Gastrocnemius medialis (tissue), 4 donors: ENCODE measurements at regions of chr12 and their contacts with region 1.

Region 1: GRCh38 chr12:110270125-110270962 is 10.7 kb upstream of the ATP2A2 start:
- DNase-seq: peak; percentile 87 to 94
- ATAC-seq: peak; percentile 79 to 86
- H3K4me3 ChIP-seq: peak overlapping the region in 1 of 4 donors; percentile 18
- H3K27ac ChIP-seq: peak overlapping the region; percentile 82 to 91 (median 88)
- H3K4me1 ChIP-seq: peaks cover 45 to 58% of the 10 kb centered on the region in 2 donors
- H3K27me3 ChIP-seq: no peaks in the 10 kb centered on the region
- CTCF ChIP-seq: no peak
- POLR2A ChIP-seq: peak; percentile 51 to 52

Region 2: GRCh38 chr12:109625131-109625559 is 645.2 kb before region 1 on chr12:
- in situ Hi-C with region 1: no loop called
- intact Hi-C with region 1: no loop called
- DNase-seq: peak; percentile 86 to 90
- ATAC-seq: peak; percentile 94 to 95
- H3K4me3 ChIP-seq: no peak overlapping the region
- H3K27ac ChIP-seq: peak overlapping the region in 2 of 4 donors; percentile 35 to 47
- H3K4me1 ChIP-seq: no peaks in the 10 kb centered on the region
- H3K27me3 ChIP-seq: peaks cover 0 to 4% (median 0%) of the 10 kb centered on the region in 3 donors
- CTCF ChIP-seq: peak in 3 of 5 experiments; percentile 15 to 24 (median 16)
- POLR2A ChIP-seq: no peak

Region 3: GRCh38 chr12:110245369-110245772 is 25.0 kb before region 1 on chr12:
- in situ Hi-C with region 1: no loop called
- intact Hi-C with region 1: loop called (anchors 1 kb)
- DNase-seq: no peak
- ATAC-seq: no peak
- H3K4me3 ChIP-seq: no peak overlapping the region
- H3K27ac ChIP-seq: peak overlapping the region; percentile 89 to 94 (median 91)
- H3K4me1 ChIP-seq: peaks cover 50 to 54% of the 10 kb centered on the region in 2 donors
- H3K27me3 ChIP-seq: no peaks in the 10 kb centered on the region
- CTCF ChIP-seq: peak in 1 of 5 experiments; percentile 9
- POLR2A ChIP-seq: no peak

Region 4: GRCh38 chr12:110253176-110253575 is 17.2 kb before region 1 on chr12:
- in situ Hi-C with region 1: no loop called
- intact Hi-C with region 1: loop called (anchors 1 kb)
- DNase-seq: peak; percentile 74 to 87
- ATAC-seq: peak; percentile 44 to 48
- H3K4me3 ChIP-seq: no peak overlapping the region
- H3K27ac ChIP-seq: peak overlapping the region; percentile 89 to 94 (median 91)
- H3K4me1 ChIP-seq: peaks cover 52% of the 10 kb centered on the region in 2 donors
- H3K27me3 ChIP-seq: no peaks in the 10 kb centered on the region
- CTCF ChIP-seq: no peak
- POLR2A ChIP-seq: peak in 1 of 2 donors; percentile 12